PC-9 (cell line): ENCODE measurements at regions of chr2 and their contacts with region 1.

Region 1: DNA sequence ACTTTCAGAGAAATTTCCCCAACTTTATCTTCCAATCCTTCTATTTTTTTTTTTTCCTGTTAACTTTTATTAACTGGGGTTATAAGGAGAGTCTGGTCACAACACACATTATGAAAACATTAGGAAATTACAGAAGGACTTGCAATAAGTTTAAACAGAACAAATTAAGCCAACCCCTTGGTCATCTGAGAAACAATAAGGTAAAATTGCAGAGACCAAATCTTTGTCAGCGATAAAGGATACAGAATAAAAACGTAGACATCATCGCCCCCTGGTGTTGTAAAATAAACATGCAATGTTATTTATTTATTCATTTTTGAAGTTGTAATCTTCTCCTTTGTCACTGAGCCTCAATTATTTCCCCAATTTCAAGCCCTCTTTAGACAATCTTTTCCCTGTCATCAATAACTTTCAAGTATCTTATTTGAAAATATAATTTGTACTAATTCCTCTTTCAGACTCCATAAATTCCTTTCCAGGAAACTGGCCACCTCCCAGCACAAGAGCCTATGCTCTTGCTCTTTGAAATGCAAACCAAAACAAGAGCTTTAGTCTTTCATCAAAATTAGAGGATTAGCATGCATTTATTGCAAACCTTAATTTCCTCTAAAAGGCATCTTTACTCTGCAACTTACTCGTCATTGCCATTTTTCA is 19.5 kb downstream of the G6PC2 start:
- DNase-seq: no peak
- H3K4me3 ChIP-seq: no peak overlapping the region
- H3K27ac ChIP-seq: no peak overlapping the region
- H3K4me1 ChIP-seq: no peaks in the 10 kb centered on the region
- H3K27me3 ChIP-seq: no peaks in the 10 kb centered on the region
- CTCF ChIP-seq: peak; percentile 73

Region 2: GRCh38 chr2:168773719-168774521 is 146.7 kb before region 1 on chr2:
- CTCF ChIA-PET with region 1: interaction called, 3 read pairs
- POLR2A ChIA-PET with region 1: no interaction called
- intact Hi-C with region 1: loop called (anchors 2 kb)
- DNase-seq: peak in 1 of 2 experiments; percentile 15
- H3K4me3 ChIP-seq: no peak overlapping the region
- H3K27ac ChIP-seq: no peak overlapping the region
- H3K4me1 ChIP-seq: no peaks in the 10 kb centered on the region
- H3K27me3 ChIP-seq: no peaks in the 10 kb centered on the region
- CTCF ChIP-seq: peak; percentile 75